ENCODE measurements at regions of chr6 and their contacts with region 1.

Region 1: DNA sequence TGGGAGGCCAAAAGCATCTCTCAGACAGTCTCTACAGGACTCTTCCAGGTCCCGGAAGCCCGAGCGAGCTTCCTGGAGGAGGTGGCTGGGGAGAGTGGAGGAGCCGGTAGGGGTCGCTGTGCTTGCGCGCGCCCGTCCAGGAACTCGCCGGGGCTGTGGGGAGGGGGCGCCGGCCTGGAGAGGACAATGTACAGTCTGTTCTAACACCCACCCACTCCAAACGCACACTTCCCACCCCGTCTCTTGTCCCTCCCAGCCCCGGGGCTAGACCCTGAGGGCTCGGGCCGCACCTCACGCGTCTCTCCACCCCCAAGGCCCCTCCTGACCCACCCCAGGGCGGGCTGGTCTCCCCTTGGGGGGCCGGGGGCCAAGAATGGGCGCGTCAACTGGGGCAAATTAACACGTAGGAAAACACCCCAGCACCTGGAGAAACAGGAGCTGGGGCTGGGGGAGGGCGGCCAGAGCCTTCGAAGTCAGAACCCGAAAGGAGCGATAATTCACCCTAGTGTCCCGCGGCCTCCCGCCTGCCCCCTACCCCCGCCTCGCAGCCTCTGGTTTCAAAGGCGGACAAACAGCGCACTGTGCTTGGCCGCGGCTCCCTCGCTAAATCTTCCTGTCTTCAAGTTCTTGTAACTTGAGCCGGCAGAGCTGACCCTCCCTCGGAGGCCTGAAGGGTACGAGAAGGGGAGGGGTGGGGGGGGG is 103.2 kb upstream of the FOXP4 start:
- DNase-seq: peak in 3 of 9 experiments; percentile 23 to 49 (median 34)
- ATAC-seq: no peak
- H3K4me3 ChIP-seq: no peak overlapping the region
- H3K4me3 Mint-ChIP-seq: peak overlapping the region; percentile 22
- H3K27ac ChIP-seq: no peak overlapping the region
- H3K27ac Mint-ChIP-seq: no peak overlapping the region
- H3K4me1 ChIP-seq: peaks cover 50% of the 10 kb centered on the region
- H3K4me1 Mint-ChIP-seq: peaks cover 47% of the 10 kb centered on the region
- H3K27me3 ChIP-seq: peaks cover 0 to 23% of the 10 kb centered on the region in 2 experiments
- H3K27me3 Mint-ChIP-seq: peaks cover 13% of the 10 kb centered on the region
- CTCF ChIP-seq: peak; percentile 34

Region 2: GRCh38 chr6:40845553-40845952 is 597.4 kb before region 1 on chr6:
- CTCF ChIA-PET with region 1: no interaction called
- POLR2A ChIA-PET with region 1: no interaction called
- intact Hi-C with region 1: no loop called
- DNase-seq: peak in 3 of 9 experiments; percentile 7 to 42 (median 38)
- ATAC-seq: no peak
- H3K4me3 ChIP-seq: no peak overlapping the region
- H3K4me3 Mint-ChIP-seq: no peak overlapping the region
- H3K27ac ChIP-seq: no peak overlapping the region
- H3K27ac Mint-ChIP-seq: no peak overlapping the region
- H3K4me1 ChIP-seq: no peaks in the 10 kb centered on the region
- H3K4me1 Mint-ChIP-seq: no peaks in the 10 kb centered on the region
- H3K27me3 ChIP-seq: no peaks in the 10 kb centered on the region
- H3K27me3 Mint-ChIP-seq: peaks cover 14% of the 10 kb centered on the region
- CTCF ChIP-seq: peak; percentile 35

Region 3: GRCh38 chr6:41424370-41425058 is 18.4 kb before region 1 on chr6:
- CTCF ChIA-PET with region 1: interaction called, 17 read pairs
- POLR2A ChIA-PET with region 1: no interaction called
- intact Hi-C with region 1: no loop called
- DNase-seq: peak; percentile 67 to 89 (median 78)
- ATAC-seq: peak; percentile 62
- H3K4me3 ChIP-seq: no peak overlapping the region
- H3K4me3 Mint-ChIP-seq: no peak overlapping the region
- H3K27ac ChIP-seq: no peak overlapping the region
- H3K27ac Mint-ChIP-seq: no peak overlapping the region
- H3K4me1 ChIP-seq: peaks cover 32% of the 10 kb centered on the region
- H3K4me1 Mint-ChIP-seq: peaks cover 9% of the 10 kb centered on the region
- H3K27me3 ChIP-seq: peaks cover 16 to 28% of the 10 kb centered on the region in 2 experiments
- H3K27me3 Mint-ChIP-seq: peaks cover 21% of the 10 kb centered on the region
- CTCF ChIP-seq: peak; percentile 91

Region 4: GRCh38 chr6:41466434-41466990 is 23.6 kb after region 1 on chr6:
- CTCF ChIA-PET with region 1: no interaction called
- POLR2A ChIA-PET with region 1: no interaction called
- intact Hi-C with region 1: loop called in 1 of 2 experiments (anchors 1 kb)
- DNase-seq: no peak
- ATAC-seq: no peak
- H3K4me3 ChIP-seq: no peak overlapping the region
- H3K4me3 Mint-ChIP-seq: no peak overlapping the region
- H3K27ac ChIP-seq: no peak overlapping the region
- H3K27ac Mint-ChIP-seq: no peak overlapping the region
- H3K4me1 ChIP-seq: no peaks in the 10 kb centered on the region
- H3K4me1 Mint-ChIP-seq: peaks cover 12% of the 10 kb centered on the region
- H3K27me3 ChIP-seq: peaks cover 13% of the 10 kb centered on the region in 2 experiments
- H3K27me3 Mint-ChIP-seq: peaks cover 70% of the 10 kb centered on the region
- CTCF ChIP-seq: no peak

Measured in CD8-positive, alpha-beta T cell (primary cell).